ENCODE measurements at regions of chr12 and their contacts with region 1.

Region 1: GRCh38 chr12:6554168-6555017 is 1.4 kb downstream of the IFFO1 start:
- DNase-seq: peak in 1 of 2 experiments; percentile 93
- H3K4me3 ChIP-seq: peak overlapping the region; percentile 70 to 87 (median 82)
- H3K27ac ChIP-seq: no peak overlapping the region
- H3K4me1 ChIP-seq: peaks cover 4 to 15% (median 9%) of the 10 kb centered on the region in 4 experiments
- H3K27me3 ChIP-seq: no peaks in the 10 kb centered on the region
- CTCF ChIP-seq: peak in 2 of 3 experiments; percentile 68 to 90; a peak in 3 of 4 replicates
- EP300 ChIP-seq: no peak
- POLR2A ChIP-seq: no peak
- RAD21 ChIP-seq: peak; percentile 31 to 47

Region 2: DNA sequence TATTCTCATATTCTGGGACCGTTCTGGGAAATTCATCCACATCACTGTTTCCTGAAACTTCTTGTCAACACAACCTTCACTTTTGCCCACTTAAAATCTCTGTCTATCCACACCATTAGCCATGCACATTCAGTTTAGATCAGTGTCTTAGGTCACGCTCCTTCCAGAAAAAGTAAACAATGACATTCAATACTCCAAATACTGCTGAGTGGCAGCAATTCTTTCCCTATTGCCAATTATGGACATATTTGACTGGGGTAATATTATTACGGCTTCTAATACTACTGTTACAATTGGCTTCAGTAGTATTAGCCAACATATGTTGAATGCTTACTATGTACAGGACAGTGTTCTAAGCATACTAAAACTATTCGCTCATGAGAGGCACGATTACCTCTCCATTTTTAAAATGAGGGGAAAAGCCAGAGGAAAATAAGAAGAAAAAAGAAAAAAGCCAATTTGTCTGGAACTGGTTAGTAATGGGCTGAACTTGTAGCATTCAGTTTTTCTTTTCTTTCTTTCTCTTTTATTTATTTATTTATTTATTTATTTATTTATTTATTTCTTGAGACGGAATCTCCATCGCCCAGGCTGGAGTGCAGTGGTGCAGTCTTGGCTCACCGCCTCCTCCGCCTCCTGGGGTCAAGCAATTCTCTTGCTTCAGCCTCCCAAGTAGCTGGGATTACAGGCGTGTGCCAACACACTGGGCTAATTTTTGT is 147.0 kb before region 1 on chr12:
- CTCF ChIA-PET with region 1: no interaction called
- POLR2A ChIA-PET with region 1: no interaction called
- DNase-seq: no peak
- H3K4me3 ChIP-seq: no peak overlapping the region
- H3K27ac ChIP-seq: no peak overlapping the region
- H3K4me1 ChIP-seq: no peaks in the 10 kb centered on the region
- H3K27me3 ChIP-seq: no peaks in the 10 kb centered on the region
- CTCF ChIP-seq: no peak
- EP300 ChIP-seq: no peak
- POLR2A ChIP-seq: no peak
- RAD21 ChIP-seq: no peak

Region 3: GRCh38 chr12:6528887-6529235 is 25.5 kb before region 1 on chr12:
- CTCF ChIA-PET with region 1: interaction called, 462 read pairs
- POLR2A ChIA-PET with region 1: interaction called, 665 read pairs
- DNase-seq: no peak
- H3K4me3 ChIP-seq: no peak overlapping the region
- H3K27ac ChIP-seq: 0 out of 2 replicates have a peak overlapping the region, but pooled peaks have one; percentile 18
- H3K4me1 ChIP-seq: peaks cover 0 to 14% (median 12%) of the 10 kb centered on the region in 4 experiments; a peak in 5 of 7 replicates
- H3K27me3 ChIP-seq: no peaks in the 10 kb centered on the region
- CTCF ChIP-seq: no peak
- EP300 ChIP-seq: no peak
- POLR2A ChIP-seq: no peak
- RAD21 ChIP-seq: no peak

Region 4: GRCh38 chr12:6582196-6582595 is 27.8 kb after region 1 on chr12:
- CTCF ChIA-PET with region 1: interaction called, 17 read pairs
- POLR2A ChIA-PET with region 1: interaction called, 7 read pairs
- DNase-seq: no peak
- H3K4me3 ChIP-seq: no peak overlapping the region
- H3K27ac ChIP-seq: no peak overlapping the region; the same call in 1 of the 2 replicates
- H3K4me1 ChIP-seq: no peaks in the 10 kb centered on the region
- H3K27me3 ChIP-seq: no peaks in the 10 kb centered on the region
- CTCF ChIP-seq: peak in 2 of 3 experiments; percentile 37 to 55; a peak in 3 of 4 replicates
- EP300 ChIP-seq: no peak
- POLR2A ChIP-seq: no peak
- RAD21 ChIP-seq: peak in 1 of 2 experiments; percentile 13; a peak in 1 of 4 replicates

Measured in H1 (cell line).